ENCODE measurements at regions of chr20 and their contacts with region 1.

Region 1: DNA sequence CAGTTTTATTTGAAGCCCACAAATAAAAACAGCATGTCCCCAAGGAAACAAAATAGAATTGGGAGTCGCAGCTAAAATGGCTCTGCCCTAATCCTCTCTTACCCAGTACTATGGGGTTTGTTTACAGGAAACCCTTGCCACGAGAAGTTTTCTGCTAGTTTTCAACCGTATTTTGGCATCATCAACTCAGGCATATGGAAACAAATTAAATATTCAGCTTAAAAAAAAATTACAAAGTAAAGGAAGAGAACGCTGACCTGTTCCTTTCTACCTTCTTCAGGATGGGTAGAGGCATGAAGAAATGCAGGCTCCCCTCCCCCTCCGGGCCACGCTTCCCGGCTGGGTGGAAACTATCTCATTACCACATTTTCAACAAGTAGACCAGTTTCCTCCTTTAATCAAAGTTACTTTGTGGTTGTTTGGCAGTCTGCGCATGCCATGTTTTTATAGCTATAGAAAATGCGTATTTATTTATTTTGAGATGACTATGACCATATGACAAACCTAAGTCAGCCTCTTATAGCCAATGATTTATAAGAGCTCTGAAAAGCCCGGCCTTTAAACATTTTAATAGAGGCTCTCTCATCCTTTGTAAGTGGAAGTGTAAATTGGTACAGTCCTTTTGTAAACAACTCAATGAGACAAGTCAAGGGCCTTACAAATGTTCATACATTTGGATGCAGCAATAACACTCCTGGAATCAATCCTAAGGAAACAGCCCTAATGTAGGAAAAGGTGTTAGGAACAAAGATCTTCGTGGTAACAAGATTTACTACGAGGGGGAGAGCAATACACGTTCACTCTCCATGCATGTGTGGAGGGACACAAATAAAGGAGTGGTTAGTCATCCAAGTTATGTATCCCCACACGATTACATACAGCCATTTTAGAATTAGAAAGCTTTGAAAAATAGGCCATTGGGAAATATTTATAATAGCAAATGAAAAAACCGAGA is 16.1 kb upstream of the ZNF217 start:
- DNase-seq: peak; percentile 68 to 84 (median 79)
- ATAC-seq: peak; percentile 83 to 88 (median 83)
- H3K4me3 ChIP-seq: peak overlapping the region; percentile 52 to 54
- H3K4me3 Mint-ChIP-seq: peak overlapping the region; percentile 80 to 88 (median 83)
- H3K27ac ChIP-seq: peak overlapping the region; percentile 92
- H3K27ac Mint-ChIP-seq: peak overlapping the region; percentile 98
- H3K4me1 ChIP-seq: peaks cover 19 to 25% of the 10 kb centered on the region in 2 experiments
- H3K4me1 Mint-ChIP-seq: peaks cover 35 to 40% (median 37%) of the 10 kb centered on the region in 3 donors
- H3K27me3 ChIP-seq: no peaks in the 10 kb centered on the region
- H3K27me3 Mint-ChIP-seq: no peaks in the 10 kb centered on the region

Region 2: DNA sequence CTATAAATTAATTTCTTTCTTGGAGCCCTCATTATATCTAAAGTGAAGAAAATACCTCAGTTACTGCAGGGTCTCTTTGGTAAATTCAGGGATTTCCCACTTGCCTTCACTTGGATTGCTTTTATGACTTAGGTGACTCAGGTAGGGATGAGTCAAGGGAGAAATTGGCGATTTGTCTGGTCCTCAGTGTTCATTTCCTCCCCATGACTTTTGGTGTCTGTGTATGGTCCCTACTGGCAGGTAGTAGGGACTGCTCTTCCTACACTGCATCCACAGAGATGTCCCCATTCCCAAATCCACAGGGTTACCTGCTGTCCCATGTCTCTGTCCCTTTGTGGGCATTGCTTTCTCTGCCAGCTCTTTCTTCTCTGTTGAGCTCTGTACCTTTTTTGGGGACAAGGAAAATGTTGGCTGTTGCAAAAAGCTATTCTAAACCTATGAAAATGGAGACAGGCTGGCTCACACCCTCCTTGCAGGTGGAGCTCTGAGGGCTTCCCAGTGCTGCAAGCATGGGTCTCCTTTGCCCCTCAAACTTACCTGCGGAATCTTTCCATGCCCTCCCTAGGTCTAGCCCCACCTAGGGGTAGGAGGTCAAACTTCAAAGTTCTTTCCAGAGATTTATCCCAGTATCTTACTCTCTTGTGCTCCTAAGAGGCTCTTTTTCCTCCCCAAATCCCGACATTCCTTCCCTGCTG is 228.1 kb before region 1 on chr20:
- CTCF ChIA-PET with region 1: no interaction called
- POLR2A ChIA-PET with region 1: no interaction called
- DNase-seq: no peak
- ATAC-seq: no peak
- H3K4me3 ChIP-seq: no peak overlapping the region
- H3K4me3 Mint-ChIP-seq: no peak overlapping the region
- H3K27ac ChIP-seq: no peak overlapping the region
- H3K27ac Mint-ChIP-seq: no peak overlapping the region
- H3K4me1 ChIP-seq: no peaks in the 10 kb centered on the region
- H3K4me1 Mint-ChIP-seq: peaks cover 0 to 3% (median 2%) of the 10 kb centered on the region in 3 donors
- H3K27me3 ChIP-seq: peaks cover 0 to 10% of the 10 kb centered on the region in 2 experiments
- H3K27me3 Mint-ChIP-seq: no peaks in the 10 kb centered on the region

Region 3: GRCh38 chr20:53434662-53435061 is 175.1 kb before region 1 on chr20:
- CTCF ChIA-PET with region 1: no interaction called
- POLR2A ChIA-PET with region 1: no interaction called
- DNase-seq: no peak
- ATAC-seq: no peak
- H3K4me3 ChIP-seq: no peak overlapping the region
- H3K4me3 Mint-ChIP-seq: no peak overlapping the region
- H3K27ac ChIP-seq: no peak overlapping the region
- H3K27ac Mint-ChIP-seq: no peak overlapping the region
- H3K4me1 ChIP-seq: no peaks in the 10 kb centered on the region
- H3K4me1 Mint-ChIP-seq: no peaks in the 10 kb centered on the region
- H3K27me3 ChIP-seq: peaks cover 0 to 10% of the 10 kb centered on the region in 2 experiments
- H3K27me3 Mint-ChIP-seq: peaks cover 0 to 3% of the 10 kb centered on the region in 2 donors

Region 4: GRCh38 chr20:53594068-53595017 is 15.4 kb before region 1 on chr20:
- CTCF ChIA-PET with region 1: interaction called in 1 of 2 experiments, 6 read pairs
- POLR2A ChIA-PET with region 1: interaction called in 1 of 2 experiments, 25 read pairs
- DNase-seq: peak; percentile 88 to 99 (median 94)
- ATAC-seq: peak; percentile 68 to 80 (median 72)
- H3K4me3 ChIP-seq: peak overlapping the region; percentile 77 to 79
- H3K4me3 Mint-ChIP-seq: peak overlapping the region; percentile 82 to 90 (median 85)
- H3K27ac ChIP-seq: peak overlapping the region; percentile 92
- H3K27ac Mint-ChIP-seq: peak overlapping the region; percentile 95 to 97
- H3K4me1 ChIP-seq: peaks cover 20 to 24% of the 10 kb centered on the region in 2 experiments
- H3K4me1 Mint-ChIP-seq: peaks cover 54 to 70% (median 58%) of the 10 kb centered on the region in 3 donors
- H3K27me3 ChIP-seq: no peaks in the 10 kb centered on the region
- H3K27me3 Mint-ChIP-seq: no peaks in the 10 kb centered on the region

Region 5: DNA sequence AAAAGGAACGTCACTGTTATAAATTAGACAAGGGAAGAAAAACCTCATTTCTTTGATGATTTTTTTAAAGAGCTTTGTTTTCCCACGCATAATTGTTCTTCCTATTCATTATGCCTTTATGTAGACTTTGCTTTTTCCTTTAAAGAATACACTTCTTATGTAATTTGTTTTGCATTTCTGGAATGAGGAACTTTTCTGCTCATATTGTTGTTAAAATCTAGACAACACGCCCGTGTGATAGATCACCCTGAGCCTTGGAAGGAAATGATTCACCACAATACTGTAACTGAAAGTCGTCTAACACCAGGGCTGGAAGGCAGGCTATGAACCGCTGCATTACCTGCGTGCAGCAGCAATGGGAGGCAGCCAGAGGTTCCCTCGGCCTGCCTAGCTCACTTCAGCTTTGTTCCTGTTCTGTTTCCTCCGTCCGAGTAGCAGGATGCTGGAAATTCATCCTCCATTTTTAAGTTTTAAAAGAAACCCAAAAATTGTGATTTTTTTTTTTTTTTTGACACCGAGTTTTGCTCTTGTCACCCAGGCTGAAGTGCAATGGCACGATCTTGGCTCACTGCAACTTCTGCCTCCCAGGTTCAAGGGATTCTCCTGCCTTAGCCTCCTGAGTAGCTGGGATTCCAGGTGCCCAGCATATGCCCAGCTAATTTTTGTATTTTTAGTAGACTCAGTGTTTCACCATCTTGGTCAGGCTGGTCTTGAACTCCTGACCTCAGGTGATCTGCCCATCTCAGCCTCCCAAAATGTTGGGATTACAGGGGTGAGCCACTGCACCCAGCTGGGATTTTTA is 33.5 kb after region 1 on chr20:
- CTCF ChIA-PET with region 1: no interaction called
- POLR2A ChIA-PET with region 1: interaction called, 7 to 10 read pairs
- DNase-seq: peak; percentile 35 to 84 (median 62)
- ATAC-seq: peak; percentile 97 to 99 (median 98)
- H3K4me3 ChIP-seq: peak overlapping the region; percentile 20 to 25
- H3K4me3 Mint-ChIP-seq: peak overlapping the region; percentile 72 to 83 (median 81)
- H3K27ac ChIP-seq: peak overlapping the region; percentile 85
- H3K27ac Mint-ChIP-seq: peak overlapping the region; percentile 97 to 99
- H3K4me1 ChIP-seq: peaks cover 13 to 38% of the 10 kb centered on the region in 2 experiments
- H3K4me1 Mint-ChIP-seq: peaks cover 49 to 60% (median 49%) of the 10 kb centered on the region in 3 donors
- H3K27me3 ChIP-seq: no peaks in the 10 kb centered on the region
- H3K27me3 Mint-ChIP-seq: no peaks in the 10 kb centered on the region

Region 6: GRCh38 chr20:53939572-53940359 is 330.0 kb after region 1 on chr20:
- CTCF ChIA-PET with region 1: no interaction called
- POLR2A ChIA-PET with region 1: no interaction called
- DNase-seq: peak; percentile 17 to 77 (median 48)
- ATAC-seq: peak; percentile 58 to 89 (median 64)
- H3K4me3 ChIP-seq: no peak overlapping the region
- H3K4me3 Mint-ChIP-seq: no peak overlapping the region
- H3K27ac ChIP-seq: no peak overlapping the region
- H3K27ac Mint-ChIP-seq: no peak overlapping the region
- H3K4me1 ChIP-seq: peaks cover 12 to 19% of the 10 kb centered on the region in 2 experiments
- H3K4me1 Mint-ChIP-seq: peaks cover 34 to 46% (median 35%) of the 10 kb centered on the region in 3 donors
- H3K27me3 ChIP-seq: no peaks in the 10 kb centered on the region
- H3K27me3 Mint-ChIP-seq: no peaks in the 10 kb centered on the region